Activated CD8-positive, alpha-beta memory T cell treated with anti-CD3 and anti-CD28 coated beads, Interleukin-2, amount 10 ng/mL, durations not matched to agents 7 days and 5 days (primary cell): ENCODE measurements at regions of chr2 and their contacts with region 1.

Region 1: GRCh38 chr2:230614913-230615332 is 97.7 kb upstream of the CAB39 start:
- DNase-seq: no peak
- ATAC-seq: no peak
- H3K4me3 Mint-ChIP-seq: no peak overlapping the region
- H3K27ac Mint-ChIP-seq: peak overlapping the region; percentile 11
- H3K4me1 Mint-ChIP-seq: peaks cover 27% of the 10 kb centered on the region
- H3K27me3 Mint-ChIP-seq: no peaks in the 10 kb centered on the region

Region 2: GRCh38 chr2:230602562-230603230 is 12.2 kb before region 1 on chr2:
- CTCF ChIA-PET with region 1: interaction called, 11 read pairs
- DNase-seq: peak; percentile 82
- ATAC-seq: peak; percentile 94
- H3K4me3 Mint-ChIP-seq: peak overlapping the region; percentile 29
- H3K27ac Mint-ChIP-seq: peak overlapping the region; percentile 94
- H3K4me1 Mint-ChIP-seq: peaks cover 49% of the 10 kb centered on the region
- H3K27me3 Mint-ChIP-seq: no peaks in the 10 kb centered on the region

Region 3: DNA sequence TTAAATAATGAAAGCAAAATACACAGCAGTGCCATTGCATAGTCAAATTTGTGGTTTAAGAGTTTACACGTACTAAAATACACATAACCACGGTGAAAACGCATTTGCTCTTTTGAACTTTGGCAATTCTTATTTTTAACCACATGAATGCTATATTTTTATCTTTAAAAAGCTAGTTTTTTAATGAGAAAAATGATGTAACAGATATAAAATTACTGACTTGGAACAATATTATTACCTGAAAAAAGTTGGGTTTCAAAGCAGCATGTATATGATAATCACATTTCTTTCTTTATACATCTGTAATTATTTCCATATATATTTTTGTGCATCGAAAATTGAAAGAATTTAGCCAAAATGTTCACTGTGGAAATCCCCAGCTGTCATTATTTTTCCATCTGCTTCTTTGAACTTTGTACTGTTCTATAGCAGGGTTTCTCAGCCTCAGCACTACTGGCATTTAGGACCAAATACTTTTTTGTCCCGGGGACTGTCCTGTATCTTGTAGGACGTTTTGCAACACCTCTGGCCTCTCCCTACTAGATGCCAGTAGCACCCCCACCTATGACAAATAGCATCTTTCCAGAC is 21.9 kb after region 1 on chr2:
- CTCF ChIA-PET with region 1: no interaction called
- DNase-seq: peak; percentile 22
- ATAC-seq: no peak
- H3K4me3 Mint-ChIP-seq: no peak overlapping the region
- H3K27ac Mint-ChIP-seq: peak overlapping the region; percentile 24
- H3K4me1 Mint-ChIP-seq: peaks cover 11% of the 10 kb centered on the region
- H3K27me3 Mint-ChIP-seq: no peaks in the 10 kb centered on the region

Region 4: GRCh38 chr2:230784795-230785194 is 169.9 kb after region 1 on chr2:
- CTCF ChIA-PET with region 1: no interaction called
- DNase-seq: no peak
- ATAC-seq: no peak
- H3K4me3 Mint-ChIP-seq: no peak overlapping the region
- H3K27ac Mint-ChIP-seq: no peak overlapping the region
- H3K4me1 Mint-ChIP-seq: peaks cover 63% of the 10 kb centered on the region
- H3K27me3 Mint-ChIP-seq: no peaks in the 10 kb centered on the region

Region 5: GRCh38 chr2:230798769-230799399 is 184.0 kb after region 1 on chr2:
- CTCF ChIA-PET with region 1: interaction called, 15 read pairs
- DNase-seq: peak; percentile 65
- ATAC-seq: no peak
- H3K4me3 Mint-ChIP-seq: no peak overlapping the region
- H3K27ac Mint-ChIP-seq: no peak overlapping the region
- H3K4me1 Mint-ChIP-seq: peaks cover 35% of the 10 kb centered on the region
- H3K27me3 Mint-ChIP-seq: no peaks in the 10 kb centered on the region